ENCODE measurements at regions of chr10 and their contacts with region 1.

Region 1: DNA sequence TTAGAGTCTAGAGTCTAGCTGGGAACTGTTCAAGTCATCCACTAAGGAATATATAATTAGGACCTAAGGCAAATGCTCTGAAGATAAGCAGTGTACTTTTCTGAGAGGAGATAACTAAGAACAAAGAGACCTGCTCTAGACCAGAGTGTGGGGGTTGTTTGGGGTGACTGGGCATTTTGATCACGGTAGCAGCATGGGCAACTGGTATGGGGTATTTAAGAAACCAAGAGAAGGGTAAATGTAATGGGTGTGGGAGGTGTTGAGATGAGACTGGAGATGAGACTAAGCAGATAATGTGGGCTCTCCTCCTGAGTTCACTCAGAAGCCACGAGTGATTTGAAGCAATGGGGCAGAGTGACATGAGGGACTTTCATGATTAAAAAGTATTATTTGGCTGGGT is 1082.9 kb downstream of the GATA3 start:
- DNase-seq: no peak
- H3K4me3 ChIP-seq: no peak overlapping the region
- H3K27ac ChIP-seq: no peak overlapping the region
- H3K4me1 ChIP-seq: no peaks in the 10 kb centered on the region
- H3K27me3 ChIP-seq: no peaks in the 10 kb centered on the region
- CTCF ChIP-seq: no peak
- EP300 ChIP-seq: no peak
- POLR2A ChIP-seq: no peak

Region 2: GRCh38 chr10:7738536-7739407 is 1398.6 kb before region 1 on chr10:
- in situ Hi-C with region 1: no loop called
- intact Hi-C with region 1: loop called (anchors 10 kb)
- DNase-seq: no peak
- H3K4me3 ChIP-seq: no peak overlapping the region
- H3K27ac ChIP-seq: no peak overlapping the region
- H3K4me1 ChIP-seq: no peaks in the 10 kb centered on the region
- H3K27me3 ChIP-seq: no peaks in the 10 kb centered on the region
- CTCF ChIP-seq: no peak
- EP300 ChIP-seq: no peak
- POLR2A ChIP-seq: no peak